ENCODE measurements at regions of chr7 and their contacts with region 1.

Region 1: DNA sequence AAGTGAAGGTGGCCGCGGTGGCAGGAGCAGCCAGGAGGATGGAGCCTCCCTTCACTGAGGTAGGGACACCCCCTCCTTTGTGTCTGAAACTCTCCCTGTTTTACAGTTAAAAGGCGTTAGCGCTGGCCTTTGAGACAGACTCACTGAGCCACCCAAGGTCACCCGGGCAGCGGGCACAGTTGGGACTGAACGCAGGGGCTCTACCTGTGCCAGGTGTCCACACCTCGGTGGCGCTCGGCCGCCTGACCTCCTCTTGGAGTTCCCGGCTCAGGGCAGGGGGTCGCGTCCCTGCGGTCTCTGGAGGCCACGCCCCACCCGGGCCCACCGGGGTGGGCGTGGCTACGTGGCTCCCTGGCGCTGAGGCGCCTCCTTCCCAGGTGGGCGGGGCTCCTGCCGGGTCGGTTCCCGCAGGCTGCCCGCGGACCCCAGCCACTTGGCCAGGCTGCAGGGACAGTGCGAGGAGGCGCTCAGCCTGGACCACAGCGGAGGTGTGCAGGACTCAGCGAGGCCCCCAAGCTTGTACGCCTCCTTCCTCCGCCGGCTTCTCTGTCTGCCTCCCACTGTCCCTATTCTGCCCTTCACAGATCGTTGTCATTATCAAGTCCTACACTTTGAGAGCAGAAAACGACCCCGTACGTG is 39.9 kb upstream of the LEP start:
- DNase-seq: no peak
- H3K4me3 ChIP-seq: no peak overlapping the region
- CTCF ChIP-seq: no peak

Region 2: GRCh38 chr7:127810696-127811660 is 390.2 kb before region 1 on chr7:
- in situ Hi-C with region 1: no loop called
- DNase-seq: no peak
- H3K4me3 ChIP-seq: no peak overlapping the region
- CTCF ChIP-seq: no peak

Region 3: GRCh38 chr7:128108641-128109423 is 92.3 kb before region 1 on chr7:
- in situ Hi-C with region 1: no loop called
- DNase-seq: no peak
- H3K4me3 ChIP-seq: no peak overlapping the region
- CTCF ChIP-seq: no peak

Region 4: GRCh38 chr7:128141683-128142195 is 59.4 kb before region 1 on chr7:
- in situ Hi-C with region 1: loop called (anchors 5 kb)
- DNase-seq: no peak
- H3K4me3 ChIP-seq: no peak overlapping the region
- CTCF ChIP-seq: no peak

Measured in astrocyte of the cerebellum (primary cell).